ENCODE measurements at regions of chr11 and their contacts with region 1.

Region 1: DNA sequence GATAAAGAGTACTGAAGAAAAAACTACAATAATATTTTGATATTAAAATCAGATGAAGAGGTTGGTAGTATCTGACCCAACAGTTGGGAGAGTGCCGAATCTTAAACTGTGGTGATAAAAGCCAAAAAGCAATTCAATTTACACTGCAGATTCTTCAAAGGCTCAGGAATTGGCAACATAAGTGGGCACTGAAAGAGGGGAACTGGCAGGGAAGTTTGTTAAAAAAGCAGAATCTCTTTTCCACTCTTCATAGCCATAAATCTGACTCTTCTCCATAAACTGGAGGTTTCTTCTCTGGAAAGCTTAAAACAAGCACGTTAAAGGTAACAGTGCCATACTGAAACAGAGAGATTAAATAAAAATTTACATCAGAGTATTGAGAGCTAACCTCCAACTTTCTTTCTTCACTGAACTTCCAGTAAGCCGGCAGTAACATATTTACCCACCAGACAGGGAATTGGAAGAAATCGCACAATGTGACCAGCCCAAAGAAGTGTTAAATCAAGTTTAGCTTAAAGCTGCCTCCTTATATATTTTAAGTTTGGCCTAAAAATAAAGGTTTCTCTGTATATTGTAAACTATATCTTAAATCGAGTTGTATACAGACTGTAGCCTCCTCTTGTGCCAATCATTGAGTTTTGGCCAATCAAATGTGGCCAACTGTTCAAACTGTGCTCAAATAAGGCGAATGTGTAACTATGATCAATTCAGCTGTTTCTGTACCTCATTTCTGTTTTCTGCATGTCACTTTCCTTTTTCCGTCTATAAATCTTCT is 358.3 kb downstream of the NXPE2 start:
- DNase-seq: no peak
- H3K4me3 ChIP-seq: no peak overlapping the region
- CTCF ChIP-seq: no peak

Region 2: GRCh38 chr11:115117956-115118493 is 81.4 kb after region 1 on chr11:
- in situ Hi-C with region 1: loop called (anchors 5 kb)
- DNase-seq: no peak
- H3K4me3 ChIP-seq: no peak overlapping the region
- CTCF ChIP-seq: no peak

Measured in astrocyte of the cerebellum (primary cell).